Sigmoid colon (tissue), 7 donors: ENCODE measurements at regions of chr7 and their contacts with region 1.

Region 1: GRCh38 chr7:135147899-135148721 is at the start of gene TMEM140:
- DNase-seq: no peak
- H3K4me3 ChIP-seq: peak within 1 kb of the TSS; percentile 43 to 57 (median 51)
- H3K27ac ChIP-seq: peak within 1 kb of the TSS; percentile 86 to 97 (median 88)
- H3K4me1 ChIP-seq: peaks cover 0 to 36% (median 22%) of the 10 kb centered on the region in 4 donors
- H3K27me3 ChIP-seq: no peaks in the 10 kb centered on the region
- CTCF ChIP-seq: no peak
- EP300 ChIP-seq: peak in 3 of 4 donors; percentile 29 to 96 (median 85)
- POLR2A ChIP-seq: peak in 1 of 2 donors; percentile 37
- total RNA-seq, gene TMEM140: 15.0 to 29.6 (median 22.8) TPM

Region 2: GRCh38 chr7:134646425-134647305 is 501.4 kb before region 1 on chr7 and contains the start of gene BPGM:
- intact Hi-C with region 1: loop called (anchors 5 kb)
- DNase-seq: peak; percentile 99
- H3K4me3 ChIP-seq: peak within 1 kb of the TSS; percentile 65 to 73 (median 68)
- H3K27ac ChIP-seq: peak within 1 kb of the TSS; percentile 76 to 90 (median 88)
- H3K4me1 ChIP-seq: peaks cover 0 to 30% (median 15%) of the 10 kb centered on the region in 4 donors
- H3K27me3 ChIP-seq: no peaks in the 10 kb centered on the region
- CTCF ChIP-seq: no peak
- EP300 ChIP-seq: no peak
- POLR2A ChIP-seq: peak; percentile 92
- total RNA-seq, gene BPGM: 14.8 to 22.8 (median 19.0) TPM

Region 3: DNA sequence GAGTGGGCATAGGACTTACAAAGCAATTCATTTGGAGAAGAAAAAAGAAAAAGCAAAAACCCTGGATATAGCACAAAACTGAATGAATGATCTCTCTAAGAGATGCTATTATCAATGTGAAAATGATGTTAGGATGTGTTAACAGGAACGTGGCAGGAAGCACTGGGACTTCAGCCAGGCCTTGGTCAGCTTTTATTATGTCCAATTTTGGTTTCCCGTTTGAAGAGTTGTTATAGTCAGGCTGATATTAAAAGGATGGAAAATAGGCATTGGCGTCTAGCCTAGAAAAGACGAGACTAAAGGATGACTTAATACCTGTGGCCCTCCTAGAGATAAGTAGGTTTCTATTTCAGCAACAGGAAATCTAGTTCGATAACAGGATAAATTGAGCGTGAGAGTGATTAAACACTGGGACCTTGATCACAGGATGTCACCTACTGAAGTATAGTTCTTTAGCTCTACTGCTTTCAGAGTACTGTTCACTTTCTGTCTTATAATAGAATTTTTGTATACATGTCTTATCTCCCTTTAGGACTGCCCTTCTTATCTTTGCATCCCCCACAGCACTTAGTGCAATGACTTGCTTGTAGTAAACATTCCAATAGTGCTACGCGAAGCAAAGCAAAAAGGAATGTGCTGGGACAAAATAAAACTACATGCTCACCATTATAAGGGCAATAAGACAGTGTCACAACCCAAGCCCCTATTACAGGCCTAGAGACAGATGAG is 261.6 kb before region 1 on chr7:
- intact Hi-C with region 1: no loop called
- DNase-seq: peak; percentile 86
- H3K4me3 ChIP-seq: no peak overlapping the region
- H3K27ac ChIP-seq: peak overlapping the region; percentile 70 to 88 (median 78)
- H3K4me1 ChIP-seq: peaks cover 0 to 79% (median 70%) of the 10 kb centered on the region in 4 donors
- H3K27me3 ChIP-seq: no peaks in the 10 kb centered on the region
- CTCF ChIP-seq: no peak
- EP300 ChIP-seq: no peak
- POLR2A ChIP-seq: no peak

Region 4: DNA sequence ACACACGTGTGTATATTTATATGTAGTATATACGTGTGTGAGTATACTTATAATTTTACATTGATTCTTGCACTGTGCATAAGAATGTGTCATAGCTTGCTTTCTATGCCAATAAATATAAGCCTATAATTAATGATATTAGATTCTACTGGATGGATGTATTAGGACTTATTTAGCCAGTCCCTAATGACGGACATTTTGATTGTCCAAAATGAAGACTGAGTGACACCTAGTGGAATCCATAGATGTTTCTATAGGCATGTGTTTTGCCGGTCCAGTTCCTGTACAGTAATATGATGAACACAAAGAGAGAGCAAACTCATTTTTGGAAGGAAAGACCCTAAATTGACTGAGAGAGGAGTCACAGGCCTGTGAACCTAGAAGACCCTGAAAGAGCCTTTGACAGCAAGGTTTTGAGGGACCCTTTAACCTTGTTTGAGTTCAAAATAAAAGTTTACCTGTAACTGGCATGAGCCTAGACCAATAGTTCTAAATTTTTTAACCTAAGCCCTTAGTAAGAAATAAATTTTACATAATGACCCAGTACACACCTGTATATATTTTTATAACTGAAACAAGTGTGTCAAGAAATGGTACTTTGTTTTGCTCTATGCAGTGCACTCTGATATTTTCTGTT is 204.2 kb before region 1 on chr7:
- intact Hi-C with region 1: no loop called
- DNase-seq: no peak
- H3K4me3 ChIP-seq: no peak overlapping the region
- H3K27ac ChIP-seq: peak overlapping the region in 3 of 4 donors; percentile 25 to 86 (median 82)
- H3K4me1 ChIP-seq: peaks cover 0 to 48% (median 25%) of the 10 kb centered on the region in 4 donors
- H3K27me3 ChIP-seq: no peaks in the 10 kb centered on the region
- CTCF ChIP-seq: peak in 1 of 4 experiments; percentile 7
- EP300 ChIP-seq: no peak
- POLR2A ChIP-seq: no peak

Region 5: GRCh38 chr7:134986363-134987251 is 161.5 kb before region 1 on chr7 and contains the start of gene AGBL3:
- intact Hi-C with region 1: loop called (anchors 2 kb)
- DNase-seq: peak; percentile 99
- H3K4me3 ChIP-seq: peak within 1 kb of the TSS; percentile 63 to 83 (median 73)
- H3K27ac ChIP-seq: peak within 1 kb of the TSS; percentile 89 to 93 (median 92)
- H3K4me1 ChIP-seq: peaks cover 0 to 18% (median 11%) of the 10 kb centered on the region in 4 donors
- H3K27me3 ChIP-seq: no peaks in the 10 kb centered on the region
- CTCF ChIP-seq: peak; percentile 55 to 75 (median 64)
- EP300 ChIP-seq: peak in 1 of 4 donors; percentile 50
- POLR2A ChIP-seq: peak in 1 of 2 donors; percentile 39
- total RNA-seq, gene AGBL3: 0.95 to 3.1 (median 1.1) TPM

Region 6: GRCh38 chr7:135170274-135170997 is 22.3 kb after region 1 on chr7 and contains the start of gene CYREN:
- intact Hi-C with region 1: loop called (anchors 1 kb)
- DNase-seq: peak; percentile 97
- H3K4me3 ChIP-seq: peak within 1 kb of the TSS; percentile 61 to 92 (median 74)
- H3K27ac ChIP-seq: peak within 1 kb of the TSS; percentile 94 to 99 (median 96)
- H3K4me1 ChIP-seq: peaks cover 0 to 46% (median 38%) of the 10 kb centered on the region in 4 donors
- H3K27me3 ChIP-seq: no peaks in the 10 kb centered on the region
- CTCF ChIP-seq: peak; percentile 35 to 62 (median 44)
- EP300 ChIP-seq: no peak
- POLR2A ChIP-seq: peak in 1 of 2 donors; percentile 49
- total RNA-seq, gene CYREN: 27.5 to 31.9 (median 29.2) TPM

Region 7: DNA sequence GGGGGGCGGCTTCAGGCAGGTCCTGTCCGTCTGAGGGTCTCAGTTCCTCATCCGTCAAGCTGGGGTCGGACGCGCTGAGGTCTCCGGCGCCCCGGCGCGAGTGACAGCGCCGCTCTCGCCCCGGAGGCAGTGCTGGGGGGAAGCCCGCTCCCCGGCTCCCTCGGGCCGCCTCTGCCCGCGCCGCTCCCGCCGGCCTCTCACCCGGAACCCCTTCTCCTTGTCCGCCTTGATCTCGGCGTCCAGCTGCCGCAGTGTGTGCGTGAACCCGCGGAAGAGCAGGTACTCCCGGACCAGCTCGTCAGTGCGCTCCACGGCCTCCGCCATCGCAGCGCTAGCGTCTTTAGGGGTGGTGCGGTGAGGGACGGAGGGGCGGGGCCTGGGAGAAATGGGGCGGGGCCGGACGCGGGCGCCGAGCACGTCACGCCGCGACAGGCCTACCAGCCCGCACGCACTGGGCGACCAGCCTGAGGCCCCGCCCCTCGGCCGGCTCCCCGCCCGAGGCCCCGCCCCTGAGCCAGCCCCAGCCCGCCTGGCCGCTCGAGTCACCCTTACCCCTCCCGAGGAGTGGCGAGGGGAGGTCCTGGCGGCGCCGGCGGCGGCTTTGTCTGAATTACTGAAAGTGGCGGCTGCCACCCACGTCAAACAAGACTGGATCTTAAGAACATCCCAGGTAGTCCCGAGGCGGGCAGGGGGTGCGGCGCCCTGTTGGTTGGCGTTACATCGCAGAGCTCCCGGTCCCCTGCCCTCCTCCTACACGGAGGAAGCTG is 63.3 kb after region 1 on chr7 and contains the start of gene WDR91:
- intact Hi-C with region 1: loop called (anchors 2 kb)
- DNase-seq: peak; percentile 98
- H3K4me3 ChIP-seq: peak within 1 kb of the TSS; percentile 67 to 83 (median 79)
- H3K27ac ChIP-seq: peak within 1 kb of the TSS; percentile 89 to 96 (median 93)
- H3K4me1 ChIP-seq: peaks cover 0 to 22% (median 18%) of the 10 kb centered on the region in 4 donors
- H3K27me3 ChIP-seq: no peaks in the 10 kb centered on the region
- CTCF ChIP-seq: no peak
- EP300 ChIP-seq: no peak
- POLR2A ChIP-seq: peak; percentile 60 to 63
- total RNA-seq, gene WDR91: 11.0 to 14.1 (median 11.4) TPM

Region 8: DNA sequence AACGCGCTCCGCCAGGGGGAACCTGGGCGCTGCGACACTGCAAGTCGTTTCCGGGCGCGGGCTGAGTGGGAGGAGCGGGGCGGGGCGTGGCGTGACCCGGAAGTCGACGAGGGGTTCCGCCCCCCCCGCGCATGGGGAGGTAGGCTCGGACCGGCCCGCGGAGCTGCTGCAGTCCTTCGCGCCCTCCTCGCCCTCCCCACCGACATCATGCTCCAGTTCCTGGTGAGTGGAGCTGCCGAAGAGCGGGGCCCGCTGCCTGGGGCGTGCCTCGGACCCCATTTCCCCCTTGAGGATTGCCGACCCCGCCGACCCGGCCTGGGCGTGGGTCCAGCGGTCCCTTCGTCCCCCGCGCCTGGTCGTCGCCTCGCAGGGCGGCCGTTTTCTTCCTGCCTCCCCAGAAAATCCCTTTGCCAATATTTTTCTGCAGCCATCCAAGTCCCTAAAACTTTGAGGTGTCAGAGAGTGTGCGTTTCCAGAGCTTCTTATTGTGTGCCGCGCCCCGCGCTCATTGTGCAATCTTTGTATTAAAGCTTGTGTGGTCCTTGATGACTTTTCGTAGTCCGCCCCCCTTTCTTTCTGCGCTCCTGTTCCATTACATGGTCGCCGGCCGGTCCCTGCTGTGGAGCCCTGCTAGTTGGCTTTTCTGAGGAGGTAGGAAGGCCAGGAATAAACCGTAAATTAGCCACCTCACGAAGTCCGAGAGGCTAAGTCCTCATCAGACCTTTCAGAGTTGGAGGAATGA is 514.4 kb after region 1 on chr7 and contains the start of gene STMP1:
- intact Hi-C with region 1: no loop called
- DNase-seq: peak; percentile 98
- H3K4me3 ChIP-seq: peak within 1 kb of the TSS; percentile 69 to 96 (median 79)
- H3K27ac ChIP-seq: peak within 1 kb of the TSS; percentile 89 to 96 (median 93)
- H3K4me1 ChIP-seq: peaks cover 0 to 36% (median 21%) of the 10 kb centered on the region in 4 donors
- H3K27me3 ChIP-seq: no peaks in the 10 kb centered on the region
- CTCF ChIP-seq: no peak
- EP300 ChIP-seq: no peak
- POLR2A ChIP-seq: peak; percentile 84 to 91
- total RNA-seq, gene STMP1: 10.2 to 25.0 (median 19.9) TPM

Region 9: GRCh38 chr7:135930565-135931461 is 782.7 kb after region 1 on chr7:
- intact Hi-C with region 1: no loop called
- DNase-seq: no peak
- H3K4me3 ChIP-seq: no peak overlapping the region
- H3K27ac ChIP-seq: peak overlapping the region in 3 of 4 donors; percentile 27 to 66 (median 65)
- H3K4me1 ChIP-seq: peaks cover 0 to 54% (median 40%) of the 10 kb centered on the region in 4 donors
- H3K27me3 ChIP-seq: no peaks in the 10 kb centered on the region
- CTCF ChIP-seq: no peak
- EP300 ChIP-seq: no peak
- POLR2A ChIP-seq: no peak